Dorsolateral prefrontal cortex (tissue), 120 donors: ENCODE measurements at regions of chr19 and their contacts with region 1.

Region 1: DNA sequence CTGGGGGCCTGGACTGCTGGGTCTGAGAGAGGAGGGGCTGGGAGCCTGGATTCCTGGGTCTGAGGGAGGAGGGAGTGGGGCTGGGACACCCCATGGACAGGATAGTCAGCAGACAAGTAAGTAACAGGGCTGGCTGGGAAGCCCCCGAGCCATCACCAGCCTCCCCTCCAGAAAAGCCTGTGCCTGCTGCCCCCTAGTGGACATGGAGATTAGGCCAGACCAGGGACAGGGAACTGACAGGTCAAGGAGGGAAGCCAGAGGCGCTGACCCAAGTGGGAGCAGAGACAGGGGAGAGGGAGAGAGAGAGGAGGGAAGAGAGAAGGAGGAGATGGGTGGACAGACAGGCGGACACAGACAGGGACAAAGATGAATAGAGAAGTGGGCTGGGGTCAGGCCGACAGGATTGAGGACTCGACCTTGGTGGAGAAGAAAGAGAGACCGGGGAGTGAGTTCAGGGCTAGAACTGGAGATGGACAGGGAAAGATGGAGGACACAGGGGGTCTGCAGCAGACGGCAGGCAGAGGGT is 6.7 kb upstream of the ERFL start:
- DNase-seq: peak in 8 of 10 donors; percentile 36 to 71 (median 50)
- H3K4me3 ChIP-seq: no peak overlapping the region
- H3K27ac ChIP-seq: no peak overlapping the region
- H3K27me3 ChIP-seq: peaks cover 0 to 59% (median 36%) of the 10 kb centered on the region in 45 donors
- CTCF ChIP-seq: peak; percentile 47 to 86 (median 74)

Region 2: DNA sequence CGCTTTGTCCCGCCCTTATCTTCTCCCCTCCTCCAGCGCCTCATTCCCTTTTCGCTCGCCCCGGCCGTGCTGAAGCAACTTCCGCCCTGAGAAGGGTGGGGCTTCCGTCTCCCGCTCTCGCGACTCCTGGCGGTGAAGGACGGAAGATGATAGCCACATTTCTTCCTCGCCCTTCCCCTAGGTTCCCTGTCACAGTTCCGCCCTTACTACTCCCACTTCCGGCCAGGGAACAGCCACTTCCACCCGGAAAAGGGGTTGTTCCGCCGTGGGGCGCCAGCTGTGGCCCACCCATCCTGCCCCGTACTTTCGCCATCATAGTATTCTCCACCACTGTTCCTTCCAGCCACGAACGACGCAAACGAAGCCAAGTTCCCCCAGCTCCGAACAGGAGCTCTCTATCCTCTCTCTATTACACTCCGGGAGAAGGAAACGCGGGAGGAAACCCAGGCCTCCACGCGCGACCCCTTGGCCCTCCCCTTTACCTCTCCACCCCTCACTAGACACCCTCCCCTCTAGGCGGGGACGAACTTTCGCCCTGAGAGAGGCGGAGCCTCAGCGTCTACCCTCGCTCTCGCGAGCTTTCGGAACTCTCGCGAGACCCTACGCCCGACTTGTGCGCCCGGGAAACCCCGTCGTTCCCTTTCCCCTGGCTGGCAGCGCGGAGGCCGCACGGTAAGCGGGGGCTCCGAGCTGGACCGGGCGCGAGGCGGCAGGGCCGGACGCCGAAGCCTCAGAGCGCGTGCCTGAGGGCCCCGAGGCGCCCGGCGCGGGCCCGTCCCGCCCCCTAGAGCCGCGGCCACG is 75.1 kb before region 1 on chr19 and contains the start of gene RPS19:
- intact Hi-C with region 1: loop called in 1 of 2 experiments (anchors 5 kb)
- DNase-seq: peak; percentile 97 to 99 (median 98)
- H3K4me3 ChIP-seq: peak within 1 kb of the TSS; percentile 51 to 99 (median 90)
- H3K27ac ChIP-seq: peak within 1 kb of the TSS; percentile 79 to 99 (median 96)
- H3K27me3 ChIP-seq: no peaks in the 10 kb centered on the region
- CTCF ChIP-seq: peak; percentile 44 to 89 (median 78)
- total RNA-seq, gene RPS19: 344 to 718 (median 462) TPM

Region 3: DNA sequence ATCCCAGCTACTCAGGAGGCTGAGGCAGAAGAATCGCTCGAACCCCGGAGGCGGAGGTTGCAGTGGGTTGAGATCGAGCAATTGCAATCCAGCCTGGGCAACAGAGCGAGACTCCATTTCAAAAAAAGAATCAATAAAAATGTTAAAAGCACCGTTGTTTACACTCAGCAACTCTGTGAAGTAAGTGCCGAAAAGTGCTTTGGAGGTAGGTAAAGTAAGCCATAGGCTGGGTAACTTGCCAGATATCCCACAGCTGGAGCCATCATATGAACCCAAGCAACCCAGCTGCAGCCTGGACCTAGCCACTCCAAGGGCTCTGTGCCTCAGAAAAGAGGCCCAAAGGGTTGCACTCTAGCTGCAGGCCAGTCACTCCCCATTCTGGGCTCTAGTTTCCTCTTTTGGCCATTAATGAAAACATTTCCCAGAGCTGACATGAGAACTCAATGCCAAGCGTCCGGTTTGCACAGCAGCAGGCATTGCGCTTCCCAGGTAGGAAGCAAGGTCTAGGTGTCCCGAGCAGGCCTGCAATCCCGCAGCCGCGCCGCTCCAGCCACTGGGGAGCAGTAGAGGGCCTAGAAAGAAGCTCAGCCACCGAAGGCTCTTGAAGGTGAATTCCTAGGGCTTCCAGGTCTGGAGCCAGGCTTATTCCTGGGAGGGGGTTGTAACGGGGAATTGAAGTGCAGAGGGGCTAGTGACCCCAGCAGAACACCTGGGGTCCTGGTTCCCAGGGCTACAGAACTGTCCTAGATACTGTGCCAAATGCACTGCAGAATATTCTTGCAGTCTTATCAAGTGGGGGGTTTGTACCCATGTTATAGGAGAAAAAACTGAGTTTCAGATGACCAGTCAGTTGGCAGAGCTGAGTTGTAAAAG is 61.9 kb before region 1 on chr19:
- intact Hi-C with region 1: loop called in 1 of 2 experiments (anchors 5 kb)
- DNase-seq: peak in 9 of 10 donors; percentile 34 to 73 (median 66)
- H3K4me3 ChIP-seq: no peak overlapping the region
- H3K27ac ChIP-seq: peak overlapping the region in 8 of 59 donors; percentile 9 to 53 (median 22)
- H3K27me3 ChIP-seq: no peaks in the 10 kb centered on the region
- CTCF ChIP-seq: peak in 54 of 56 donors; percentile 8 to 75 (median 61)

Region 4: DNA sequence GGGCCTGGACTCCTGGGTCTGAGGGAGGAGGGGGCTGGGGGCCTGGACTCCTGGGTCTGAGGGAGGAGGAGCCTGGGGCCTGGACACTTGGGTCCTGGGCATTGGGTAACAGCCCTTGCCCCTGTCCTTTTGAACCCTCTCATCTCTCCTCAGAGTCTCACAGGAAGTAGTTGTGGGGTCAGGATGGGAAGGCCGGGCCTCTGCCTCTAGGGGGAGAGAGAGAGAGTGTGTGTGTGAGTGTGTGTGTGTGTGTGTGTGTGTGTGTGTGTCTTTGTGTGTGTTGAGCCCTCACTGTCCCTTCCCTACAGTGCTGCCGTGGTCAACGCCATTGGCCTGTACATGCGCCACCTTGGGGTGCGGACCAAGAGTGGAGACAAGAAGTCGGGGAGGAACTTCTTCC is 41.0 kb before region 1 on chr19:
- intact Hi-C with region 1: loop called in 1 of 2 experiments (anchors 5 kb)
- DNase-seq: no peak
- H3K4me3 ChIP-seq: no peak overlapping the region
- H3K27ac ChIP-seq: no peak overlapping the region
- H3K27me3 ChIP-seq: no peaks in the 10 kb centered on the region
- CTCF ChIP-seq: no peak